GM18951 (cell line): ENCODE measurements at regions of chr1 and their contacts with region 1.

Region 1: GRCh38 chr1:186985889-186986491 is 157.2 kb downstream of the PLA2G4A start:
- POLR2A ChIP-seq: no peak

Region 2: GRCh38 chr1:186482661-186483255 is 503.2 kb before region 1 on chr1:
- in situ Hi-C with region 1: loop called (anchors 10 kb)
- POLR2A ChIP-seq: no peak

Region 3: DNA sequence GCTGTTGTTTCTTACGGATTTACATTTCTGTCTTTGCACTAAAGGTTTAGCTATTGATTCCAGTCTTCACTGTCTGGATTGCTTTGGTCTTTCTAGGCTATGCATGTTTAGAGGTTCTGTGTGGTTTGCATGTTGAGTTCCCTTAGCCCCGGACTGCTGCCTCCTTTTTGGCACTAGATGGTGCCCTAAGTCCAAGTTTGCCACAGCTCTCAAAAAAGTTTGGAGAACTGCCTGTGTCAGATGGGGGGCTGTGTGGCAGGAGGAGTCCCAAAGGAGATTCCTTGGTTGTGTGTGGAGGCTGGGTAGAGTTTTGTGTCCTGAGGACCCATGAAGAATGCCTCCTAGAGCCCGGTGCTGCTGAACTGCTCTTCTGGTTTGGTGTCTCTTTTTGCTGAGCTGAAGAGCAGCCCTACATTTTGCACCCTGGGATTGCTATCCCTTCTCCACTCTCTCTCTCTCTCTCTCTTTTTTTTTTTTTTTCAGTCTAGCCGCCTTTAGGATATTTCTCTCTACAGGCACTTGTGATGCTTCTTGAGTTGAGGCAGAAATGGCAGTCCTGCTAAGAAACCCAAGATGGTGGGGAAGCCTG is 380.1 kb before region 1 on chr1:
- in situ Hi-C with region 1: loop called (anchors 10 kb)
- POLR2A ChIP-seq: no peak

Region 4: GRCh38 chr1:186915555-186915954 is 70.4 kb before region 1 on chr1:
- in situ Hi-C with region 1: no loop called
- POLR2A ChIP-seq: no peak

Region 5: GRCh38 chr1:187110351-187110750 is 124.4 kb after region 1 on chr1:
- in situ Hi-C with region 1: no loop called
- POLR2A ChIP-seq: no peak

Region 6: DNA sequence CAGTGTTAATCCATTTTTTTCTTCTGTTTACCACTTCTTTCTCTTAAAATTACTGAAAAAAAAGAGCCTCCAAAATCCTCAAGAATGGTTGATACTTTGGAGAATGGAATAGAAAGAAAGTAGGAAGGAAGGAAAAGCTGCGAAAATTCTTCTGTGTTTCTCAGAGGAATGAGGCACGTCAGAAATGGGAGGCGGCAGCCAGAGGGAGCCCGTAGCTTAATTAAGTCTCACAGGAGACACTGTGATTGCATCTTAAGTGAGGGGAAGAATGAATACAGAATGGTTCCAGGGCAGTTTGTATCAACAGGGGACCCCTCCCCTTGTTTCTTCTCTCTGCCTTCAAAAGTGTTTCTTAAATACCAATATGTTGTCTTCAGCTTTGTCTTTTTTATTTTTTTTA is 942.3 kb after region 1 on chr1:
- in situ Hi-C with region 1: no loop called
- POLR2A ChIP-seq: no peak